Sciatic nerve (tissue), 2 donors: ENCODE measurements at regions of chr1 and their contacts with region 1.

Region 1: GRCh38 chr1:150957666-150958065 is 17.0 kb downstream of the CERS2 start:
- DNase-seq: no peak
- ATAC-seq: no peak

Region 2: DNA sequence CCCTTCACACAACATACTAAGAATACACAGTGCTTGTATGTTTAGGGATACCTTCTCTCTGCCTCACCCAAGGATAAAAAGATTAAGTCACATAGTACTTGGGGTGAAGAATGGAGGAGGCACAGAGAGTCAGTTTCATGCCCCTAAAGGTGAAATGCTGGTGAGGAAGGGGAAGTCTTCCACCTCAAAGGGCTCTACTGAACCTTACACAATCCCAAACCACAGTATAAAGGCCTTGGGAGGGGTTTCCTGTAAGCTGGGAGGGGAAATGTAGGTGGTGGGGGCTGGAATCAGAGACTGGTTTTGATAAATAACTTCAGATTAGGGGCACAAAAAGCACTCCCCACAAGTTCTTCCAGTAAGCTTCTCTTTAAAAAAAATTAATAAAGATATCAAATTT is 45.5 kb after region 1 on chr1:
- intact Hi-C with region 1: loop called (anchors 1 kb)
- DNase-seq: no peak
- ATAC-seq: no peak